ENCODE measurements at regions of chr4 and their contacts with region 1.

Region 1: GRCh38 chr4:26885912-26886274 is 25.3 kb downstream of the STIM2 start:
- DNase-seq: no peak
- H3K4me3 Mint-ChIP-seq: peak overlapping the region; percentile 63
- H3K27ac Mint-ChIP-seq: peak overlapping the region; percentile 83
- H3K4me1 Mint-ChIP-seq: peaks cover 67% of the 10 kb centered on the region
- H3K27me3 Mint-ChIP-seq: no peaks in the 10 kb centered on the region

Region 2: DNA sequence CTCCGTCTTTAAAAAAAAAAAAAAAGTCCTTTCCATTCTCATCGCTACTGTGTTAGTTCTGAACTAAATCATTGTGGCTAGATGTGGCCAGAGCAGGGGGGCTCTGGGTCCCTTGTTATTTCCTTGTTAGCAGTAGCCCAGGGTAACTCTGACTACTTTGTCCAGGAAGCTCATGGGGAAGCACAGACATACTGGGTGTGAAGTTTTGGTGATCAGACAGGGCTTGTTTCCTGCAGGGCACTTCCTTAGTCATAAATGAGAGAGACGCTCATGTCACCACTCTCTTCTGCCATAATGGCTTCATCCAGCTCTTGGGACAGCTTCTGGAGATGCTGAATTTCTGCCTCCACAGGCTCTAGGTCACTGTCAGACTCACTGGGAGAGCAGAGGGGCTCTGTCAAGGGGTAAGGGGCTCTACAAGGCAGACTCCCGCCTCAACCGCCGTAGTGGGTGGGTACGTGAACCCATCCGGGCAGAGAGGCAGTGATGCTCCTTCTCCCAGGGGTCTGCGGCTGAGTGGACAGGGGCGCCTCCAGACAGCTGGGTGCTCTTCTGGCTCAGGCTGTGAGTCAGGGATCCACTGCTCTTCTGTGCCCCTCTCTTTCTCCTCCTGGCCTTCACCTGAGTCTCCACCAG is 12.4 kb before region 1 on chr4:
- CTCF ChIA-PET with region 1: interaction called, 3 read pairs
- POLR2A ChIA-PET with region 1: interaction called, 26 read pairs
- intact Hi-C with region 1: loop called (anchors 1 kb)
- DNase-seq: peak; percentile 87
- H3K4me3 Mint-ChIP-seq: peak overlapping the region; percentile 43
- H3K27ac Mint-ChIP-seq: peak overlapping the region; percentile 88
- H3K4me1 Mint-ChIP-seq: peaks cover 77% of the 10 kb centered on the region
- H3K27me3 Mint-ChIP-seq: no peaks in the 10 kb centered on the region

Region 3: DNA sequence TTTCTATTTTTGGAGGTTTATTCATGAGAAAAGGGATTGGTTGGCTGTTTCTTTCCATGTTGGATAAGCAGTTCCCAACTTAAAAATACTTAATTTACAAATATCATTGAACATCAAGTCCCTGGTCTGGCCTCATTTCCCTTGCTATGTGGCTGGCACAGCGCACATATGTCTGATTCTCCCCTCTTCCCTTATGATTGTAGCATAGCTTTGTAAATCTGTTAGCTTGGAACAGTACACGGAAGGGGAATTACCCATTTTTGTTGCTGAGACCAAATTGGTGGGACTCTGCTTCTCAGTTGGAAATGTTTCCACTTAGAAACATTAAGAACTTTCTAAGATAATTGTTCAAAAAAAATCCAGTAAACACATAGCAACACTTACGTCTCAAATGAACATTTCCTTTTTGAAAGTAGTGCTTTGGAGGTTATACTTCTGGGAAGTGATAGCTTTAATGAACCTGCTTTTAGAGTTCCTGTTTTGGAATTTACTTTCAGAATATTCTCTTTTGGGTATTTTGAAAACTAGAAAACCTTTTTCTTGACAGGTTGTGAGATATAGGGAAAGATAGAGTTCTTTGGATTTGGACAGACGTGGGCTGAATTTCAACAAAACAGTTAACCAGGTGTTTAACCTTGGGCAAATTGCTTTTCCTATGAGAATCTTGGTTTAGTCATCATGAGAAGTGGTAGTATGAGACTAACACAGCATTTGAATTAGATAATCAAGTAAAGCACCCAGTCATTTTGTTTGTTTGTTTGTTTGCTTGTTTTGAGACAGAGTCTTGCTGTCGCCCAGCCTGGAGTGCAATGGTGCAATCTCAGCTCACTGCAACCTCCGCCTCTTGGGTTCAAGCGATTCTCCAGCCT is 22.1 kb after region 1 on chr4:
- CTCF ChIA-PET with region 1: no interaction called
- POLR2A ChIA-PET with region 1: no interaction called
- intact Hi-C with region 1: loop called (anchors 1 kb)
- DNase-seq: no peak
- H3K4me3 Mint-ChIP-seq: no peak overlapping the region
- H3K27ac Mint-ChIP-seq: peak overlapping the region; percentile 39
- H3K4me1 Mint-ChIP-seq: peaks cover 68% of the 10 kb centered on the region
- H3K27me3 Mint-ChIP-seq: no peaks in the 10 kb centered on the region

Region 4: DNA sequence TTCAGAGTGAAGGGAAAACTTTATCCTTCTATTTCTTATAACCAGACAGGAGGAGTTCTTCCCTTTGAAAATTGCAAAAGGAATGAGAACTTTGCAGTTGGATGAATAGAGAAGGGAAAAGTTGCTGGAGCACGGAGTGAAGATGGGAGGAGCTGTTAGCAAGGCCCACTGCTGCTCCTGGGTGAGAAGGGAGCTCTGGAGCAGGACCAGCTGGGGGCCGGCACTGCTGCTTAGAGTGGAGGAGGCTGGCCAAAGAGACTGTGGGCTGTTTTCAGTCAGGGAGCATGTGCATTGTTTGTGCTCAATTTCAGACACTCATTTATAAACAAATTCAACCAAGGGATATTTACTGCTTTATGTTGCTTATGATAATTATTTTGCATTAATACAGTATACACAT is 138.9 kb after region 1 on chr4:
- CTCF ChIA-PET with region 1: no interaction called
- POLR2A ChIA-PET with region 1: no interaction called
- intact Hi-C with region 1: no loop called
- DNase-seq: no peak
- H3K4me3 Mint-ChIP-seq: no peak overlapping the region
- H3K27ac Mint-ChIP-seq: no peak overlapping the region
- H3K4me1 Mint-ChIP-seq: peaks cover 8% of the 10 kb centered on the region
- H3K27me3 Mint-ChIP-seq: no peaks in the 10 kb centered on the region

Region 5: DNA sequence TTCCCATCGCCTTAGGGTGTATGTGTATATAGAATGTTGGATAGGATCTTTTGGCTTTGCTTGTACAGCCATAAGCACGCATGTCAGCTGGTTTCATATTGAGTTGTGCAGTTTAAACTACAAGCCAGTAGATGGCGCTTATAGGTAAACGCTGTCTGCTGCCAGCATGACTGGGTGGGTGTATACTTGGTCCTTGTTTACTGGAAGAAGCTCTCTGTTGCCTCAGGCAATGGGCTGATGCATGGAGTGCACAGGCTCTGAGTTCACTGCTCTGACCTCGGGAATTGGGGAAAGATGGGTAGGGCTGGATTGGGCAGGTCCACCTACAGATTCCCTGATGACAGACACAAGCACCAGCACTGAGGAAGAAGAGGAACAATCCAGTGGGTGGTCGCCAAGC is 806.3 kb after region 1 on chr4:
- CTCF ChIA-PET with region 1: no interaction called
- POLR2A ChIA-PET with region 1: no interaction called
- intact Hi-C with region 1: no loop called
- DNase-seq: no peak
- H3K4me3 Mint-ChIP-seq: no peak overlapping the region
- H3K27ac Mint-ChIP-seq: no peak overlapping the region
- H3K4me1 Mint-ChIP-seq: no peaks in the 10 kb centered on the region
- H3K27me3 Mint-ChIP-seq: no peaks in the 10 kb centered on the region

Measured in activated CD4-positive, alpha-beta memory T cell treated with anti-CD3 and anti-CD28 coated beads for 36 hours (primary cell).